PC-3 (cell line): ENCODE measurements at regions of chr12 and their contacts with region 1.

Region 1: DNA sequence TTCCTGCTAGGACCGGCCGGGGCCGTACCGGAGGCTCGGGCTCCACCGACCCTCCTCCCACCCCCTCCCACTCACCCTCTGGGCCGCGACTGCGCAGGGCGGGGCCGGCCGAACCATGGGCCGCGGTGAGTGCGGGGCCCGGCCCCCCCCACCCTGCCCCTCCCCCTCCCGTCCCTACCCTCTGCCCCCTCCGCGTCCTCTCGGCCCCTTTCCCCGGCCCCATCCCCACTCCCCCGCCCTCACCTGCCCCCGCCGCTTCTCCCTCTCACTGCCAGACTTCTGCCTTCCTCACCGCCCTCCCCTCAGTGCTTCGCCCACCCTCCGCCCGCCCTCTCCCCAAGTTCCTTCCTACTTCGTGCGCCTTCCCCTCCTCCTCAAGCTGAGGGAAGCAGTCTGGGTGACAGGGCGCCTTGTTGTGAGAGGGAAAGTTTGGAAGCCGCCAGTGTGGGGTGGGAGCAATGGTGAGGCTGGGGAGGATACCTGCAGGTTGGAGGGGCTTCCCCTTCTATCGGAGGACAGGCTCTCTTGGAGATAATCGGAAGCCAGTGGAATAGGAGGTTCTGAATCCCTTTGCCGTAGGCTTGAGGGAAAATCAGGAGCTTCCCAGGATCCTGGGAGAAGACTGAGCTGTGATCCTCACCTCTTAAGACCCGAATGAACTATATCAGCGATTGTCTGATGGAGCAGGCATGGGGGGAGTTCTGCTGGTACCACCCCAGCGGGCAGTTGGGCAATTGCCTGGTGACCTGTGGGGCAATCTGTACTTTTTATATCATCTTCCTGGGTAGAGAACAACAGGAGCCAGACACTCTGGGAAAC is 472 bp downstream of the MBD6 start:
- DNase-seq: peak; percentile 46
- ATAC-seq: peak; percentile 1
- H3K4me3 ChIP-seq: peak overlapping the region; percentile 71
- H3K27ac ChIP-seq: peak overlapping the region; percentile 77
- H3K4me1 ChIP-seq: peaks cover 39% of the 10 kb centered on the region
- H3K27me3 ChIP-seq: no peaks in the 10 kb centered on the region
- CTCF ChIP-seq: no peak

Region 2: GRCh38 chr12:57674691-57675090 is 151.6 kb after region 1 on chr12:
- CTCF ChIA-PET with region 1: no interaction called
- POLR2A ChIA-PET with region 1: no interaction called
- intact Hi-C with region 1: no loop called
- DNase-seq: no peak
- ATAC-seq: no peak
- H3K4me3 ChIP-seq: no peak overlapping the region
- H3K27ac ChIP-seq: no peak overlapping the region
- H3K4me1 ChIP-seq: no peaks in the 10 kb centered on the region
- H3K27me3 ChIP-seq: no peaks in the 10 kb centered on the region; the same call in 1 of the 2 replicates
- CTCF ChIP-seq: no peak

Region 3: GRCh38 chr12:57693659-57694458 is 170.8 kb after region 1 on chr12 and contains the start of gene OS9:
- CTCF ChIA-PET with region 1: no interaction called
- POLR2A ChIA-PET with region 1: no interaction called
- intact Hi-C with region 1: no loop called
- DNase-seq: peak; percentile 99
- ATAC-seq: peak; percentile 98
- H3K4me3 ChIP-seq: peak within 1 kb of the TSS; percentile 97
- H3K27ac ChIP-seq: no peak within 1 kb of the TSS
- H3K4me1 ChIP-seq: peaks cover 12% of the 10 kb centered on the region
- H3K27me3 ChIP-seq: no peaks in the 10 kb centered on the region
- CTCF ChIP-seq: peak; percentile 74
- total RNA-seq, gene OS9: 145 and 223 TPM in 2 replicates

Region 4: GRCh38 chr12:57736741-57737466 is 213.8 kb after region 1 on chr12:
- CTCF ChIA-PET with region 1: interaction called, 12 read pairs
- POLR2A ChIA-PET with region 1: no interaction called
- intact Hi-C with region 1: no loop called
- DNase-seq: no peak
- ATAC-seq: peak; percentile 18
- H3K4me3 ChIP-seq: peak overlapping the region; percentile 64
- H3K27ac ChIP-seq: no peak overlapping the region
- H3K4me1 ChIP-seq: peaks cover 17% of the 10 kb centered on the region
- H3K27me3 ChIP-seq: peaks cover 50% of the 10 kb centered on the region
- CTCF ChIP-seq: no peak